AG04450 (cell line): ENCODE measurements at regions of chr18 and their contacts with region 1.

Region 1: DNA sequence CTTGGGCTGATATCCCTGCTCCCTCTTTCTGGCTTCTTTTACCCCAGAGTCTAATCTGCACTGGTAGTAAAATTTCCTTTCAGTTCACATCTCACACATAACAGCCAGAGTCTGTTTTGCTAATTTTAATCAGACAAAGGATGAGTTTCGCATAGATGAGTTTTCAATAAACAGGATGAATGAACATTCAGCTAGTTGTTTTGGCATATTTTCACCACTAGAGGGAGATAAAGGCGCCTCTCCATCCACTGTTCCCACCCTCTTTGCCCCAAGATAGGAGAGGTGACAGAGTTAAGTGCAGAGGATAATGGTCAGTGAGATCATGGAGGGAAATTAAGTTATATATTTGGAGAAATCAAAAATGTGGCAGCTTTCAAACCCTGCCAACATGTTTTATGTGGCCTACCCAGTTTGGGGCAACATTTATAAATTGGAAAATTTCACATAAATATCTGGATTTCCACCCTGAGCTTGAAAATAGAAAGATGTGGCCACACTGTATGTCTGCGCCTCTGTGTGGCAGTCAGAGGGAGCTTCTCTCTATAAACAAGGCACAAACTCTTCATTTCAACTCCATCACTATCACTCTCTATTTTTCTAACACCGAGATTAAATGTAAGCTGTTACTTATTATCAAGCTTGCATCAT is 48.5 kb upstream of the DTNA start:
- DNase-seq: peak; percentile 7
- H3K4me3 ChIP-seq: no peak overlapping the region
- H3K27ac ChIP-seq: no peak overlapping the region
- H3K27me3 ChIP-seq: no peaks in the 10 kb centered on the region
- CTCF ChIP-seq: peak; percentile 90

Region 2: GRCh38 chr18:34611904-34612303 is 49.7 kb before region 1 on chr18:
- CTCF ChIA-PET with region 1: interaction called, 11 read pairs
- POLR2A ChIA-PET with region 1: no interaction called
- DNase-seq: no peak
- H3K4me3 ChIP-seq: no peak overlapping the region
- H3K27ac ChIP-seq: no peak overlapping the region
- H3K27me3 ChIP-seq: no peaks in the 10 kb centered on the region
- CTCF ChIP-seq: no peak

Region 3: GRCh38 chr18:34695310-34695709 is 33.7 kb after region 1 on chr18:
- CTCF ChIA-PET with region 1: interaction called, 56 read pairs
- POLR2A ChIA-PET with region 1: no interaction called
- DNase-seq: no peak
- H3K4me3 ChIP-seq: no peak overlapping the region
- H3K27ac ChIP-seq: no peak overlapping the region
- H3K27me3 ChIP-seq: no peaks in the 10 kb centered on the region
- CTCF ChIP-seq: no peak

Region 4: DNA sequence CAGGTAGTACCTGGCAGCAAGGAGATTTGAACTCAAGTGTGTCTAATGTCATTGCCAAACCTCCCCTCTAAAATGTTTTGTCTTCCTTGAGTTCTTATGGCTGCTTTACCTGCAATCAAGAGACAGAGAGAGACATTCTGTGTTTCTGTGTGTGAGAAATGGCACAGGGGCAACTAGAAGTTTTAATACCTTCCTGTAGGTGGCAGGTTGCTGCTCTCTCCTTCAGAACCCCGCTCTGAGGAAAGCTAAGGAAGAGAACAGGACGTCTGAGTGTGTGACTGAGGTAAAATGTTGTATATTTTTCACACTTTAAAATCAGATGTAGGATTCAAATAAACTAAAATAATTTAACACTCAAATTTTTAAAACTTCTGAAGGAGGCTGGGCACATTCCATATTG is 67.7 kb after region 1 on chr18:
- CTCF ChIA-PET with region 1: interaction called, 10 read pairs
- POLR2A ChIA-PET with region 1: no interaction called
- DNase-seq: no peak
- H3K4me3 ChIP-seq: no peak overlapping the region
- H3K27ac ChIP-seq: no peak overlapping the region
- H3K27me3 ChIP-seq: no peaks in the 10 kb centered on the region
- CTCF ChIP-seq: peak; percentile 60

Region 5: DNA sequence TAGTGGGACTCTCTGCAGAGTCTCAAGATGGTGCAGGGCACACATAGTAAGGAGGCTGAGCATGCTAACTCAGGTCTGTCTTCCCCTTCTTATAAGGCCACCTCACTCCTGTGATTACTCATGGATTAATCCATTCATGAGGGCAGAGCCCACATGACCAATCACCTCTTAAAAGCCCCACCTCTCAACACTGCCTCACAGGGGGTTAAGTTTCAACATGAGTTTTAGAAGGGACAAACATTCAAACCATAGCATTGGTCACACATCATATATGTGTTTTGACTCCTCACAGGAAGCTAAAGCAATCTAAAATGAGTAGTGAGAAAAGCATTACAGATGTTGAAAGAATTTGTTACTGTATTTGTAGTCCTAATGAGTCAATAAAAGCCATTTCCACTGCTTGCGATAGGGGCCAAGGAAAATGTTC is 106.0 kb after region 1 on chr18:
- CTCF ChIA-PET with region 1: interaction called, 28 read pairs
- POLR2A ChIA-PET with region 1: no interaction called
- DNase-seq: peak; percentile 77
- H3K4me3 ChIP-seq: no peak overlapping the region
- H3K27ac ChIP-seq: peak overlapping the region; percentile 79
- H3K27me3 ChIP-seq: no peaks in the 10 kb centered on the region
- CTCF ChIP-seq: no peak

Region 6: GRCh38 chr18:34787931-34788532 is 126.4 kb after region 1 on chr18:
- CTCF ChIA-PET with region 1: interaction called, 199 read pairs
- POLR2A ChIA-PET with region 1: interaction called, 3 read pairs
- DNase-seq: no peak
- H3K4me3 ChIP-seq: no peak overlapping the region
- H3K27ac ChIP-seq: no peak overlapping the region
- H3K27me3 ChIP-seq: no peaks in the 10 kb centered on the region
- CTCF ChIP-seq: peak; percentile 69

Region 7: DNA sequence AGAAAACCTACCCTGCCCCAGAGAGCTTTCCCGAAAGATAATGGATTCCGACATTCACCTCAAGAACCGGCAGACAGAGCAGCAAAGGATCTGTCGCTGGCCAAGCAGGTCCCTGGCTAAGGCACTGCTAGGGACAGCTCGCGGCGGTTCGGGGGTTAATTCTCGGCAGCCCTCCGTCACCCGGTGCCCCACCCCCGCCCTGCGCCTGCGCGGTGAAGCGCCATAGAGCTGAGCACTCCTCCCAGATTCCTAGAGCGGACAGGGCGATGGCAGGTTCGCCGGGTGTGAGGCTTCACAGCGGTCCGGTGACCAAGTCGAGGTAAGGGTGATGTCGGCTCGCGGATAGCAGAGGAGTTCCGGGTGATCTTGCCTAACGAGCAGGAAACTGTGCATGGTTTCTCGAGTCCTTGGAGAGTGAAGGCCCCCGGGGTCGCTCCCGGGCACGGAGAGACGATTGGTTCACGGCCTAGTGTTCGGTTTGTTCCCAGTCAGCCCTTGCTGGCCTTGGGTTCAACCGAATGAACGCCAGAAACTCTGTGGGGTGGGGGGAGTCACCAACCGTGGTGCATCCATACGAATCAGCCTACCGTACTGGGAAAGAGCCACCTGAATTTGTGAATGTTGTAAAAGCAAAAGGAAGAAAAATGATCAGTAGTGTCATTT is 628.6 kb after region 1 on chr18 and contains the start of gene ZSCAN30:
- CTCF ChIA-PET with region 1: no interaction called
- POLR2A ChIA-PET with region 1: no interaction called
- DNase-seq: peak; percentile 86
- H3K4me3 ChIP-seq: peak within 1 kb of the TSS; percentile 89
- H3K27ac ChIP-seq: peak within 1 kb of the TSS; percentile 69
- H3K27me3 ChIP-seq: no peaks in the 10 kb centered on the region
- CTCF ChIP-seq: no peak
- polyA plus RNA-seq, gene ZSCAN30: 14.4 and 14.5 TPM in 2 replicates